ENCODE measurements at regions of chr6 and their contacts with region 1.

Region 1: DNA sequence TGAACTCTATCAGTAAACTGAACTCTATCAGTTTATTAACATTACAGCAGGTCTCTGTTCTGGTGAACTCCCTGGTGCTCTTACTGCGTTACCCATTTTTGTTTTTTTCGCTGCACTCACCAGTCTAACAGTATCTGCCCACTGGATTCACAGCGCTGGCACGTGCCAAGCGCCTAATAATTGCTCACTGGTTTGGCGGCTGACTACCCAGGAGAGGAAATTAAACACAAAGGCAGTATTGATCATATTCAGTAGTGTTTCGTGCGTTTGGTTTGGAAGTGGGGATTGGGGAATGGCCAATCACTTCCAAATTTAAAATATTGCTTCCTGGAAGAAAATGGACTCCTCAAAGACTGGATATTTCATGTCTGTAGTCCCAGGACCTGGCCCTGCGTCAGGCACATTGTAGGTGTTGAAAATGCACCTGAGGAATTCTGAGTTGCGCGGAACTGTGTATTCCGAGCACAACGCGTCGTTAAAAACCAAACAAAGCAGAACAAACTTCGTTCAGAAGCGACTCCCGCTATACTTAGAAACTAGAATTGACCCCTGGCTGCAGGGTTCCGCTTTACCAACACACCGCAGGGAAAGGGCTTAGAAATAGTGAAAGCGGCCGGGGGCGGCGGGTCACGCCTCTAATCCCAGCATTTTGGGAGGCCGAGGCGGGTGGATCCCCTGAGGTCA is 1.1 kb upstream of the RPS12 start:
- DNase-seq: no peak
- ATAC-seq: peak; percentile 6
- H3K4me3 ChIP-seq: peak overlapping the region; percentile 73
- H3K27ac ChIP-seq: peak overlapping the region; percentile 95
- H3K4me1 ChIP-seq: peaks cover 2% of the 10 kb centered on the region
- H3K27me3 ChIP-seq: no peaks in the 10 kb centered on the region; the same call in 1 of the 2 replicates
- CTCF ChIP-seq: no peak
- POLR2A ChIP-seq: no peak
- RAD21 ChIP-seq: no peak

Region 2: GRCh38 chr6:131995917-131996316 is 817.4 kb before region 1 on chr6:
- CTCF ChIA-PET with region 1: no interaction called
- POLR2A ChIA-PET with region 1: interaction called, 10 read pairs
- dilution Hi-C with region 1: no loop called
- in situ Hi-C with region 1: no loop called
- intact Hi-C with region 1: no loop called
- DNase-seq: peak; percentile 94
- ATAC-seq: peak; percentile 85
- H3K4me3 ChIP-seq: no peak overlapping the region
- H3K27ac ChIP-seq: no peak overlapping the region
- H3K4me1 ChIP-seq: peaks cover 2% of the 10 kb centered on the region
- H3K27me3 ChIP-seq: no peaks in the 10 kb centered on the region
- CTCF ChIP-seq: no peak
- POLR2A ChIP-seq: no peak
- RAD21 ChIP-seq: no peak

Region 3: DNA sequence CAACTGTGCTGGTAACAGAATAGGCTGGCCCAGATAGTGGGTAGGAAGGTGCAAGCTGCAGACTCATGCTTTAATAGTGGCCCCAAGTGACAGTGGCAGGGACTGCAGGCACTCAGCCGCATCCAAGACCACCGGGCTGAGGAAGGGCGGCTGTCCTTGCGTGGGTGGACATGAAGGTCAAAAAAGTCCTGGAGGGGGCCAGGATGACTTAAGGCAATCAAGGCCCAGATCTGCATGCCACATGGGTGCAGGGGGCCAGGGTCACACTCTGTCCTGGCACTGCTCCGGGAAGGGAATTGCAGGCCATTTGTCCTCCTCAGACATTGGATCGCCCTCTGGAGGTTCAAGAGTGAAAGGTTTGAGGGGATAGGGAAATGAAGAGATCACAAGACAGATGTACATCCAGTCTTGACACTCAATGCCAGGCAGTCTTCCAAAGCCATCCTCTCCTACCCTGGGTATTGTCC is 45.2 kb before region 1 on chr6:
- CTCF ChIA-PET with region 1: no interaction called
- POLR2A ChIA-PET with region 1: interaction called, 4 read pairs
- dilution Hi-C with region 1: no loop called
- in situ Hi-C with region 1: no loop called
- intact Hi-C with region 1: loop called (anchors 1 kb)
- DNase-seq: no peak
- ATAC-seq: peak; percentile 61
- H3K4me3 ChIP-seq: no peak overlapping the region
- H3K27ac ChIP-seq: no peak overlapping the region
- H3K4me1 ChIP-seq: peaks cover 2% of the 10 kb centered on the region; the same call in 1 of the 2 replicates
- H3K27me3 ChIP-seq: no peaks in the 10 kb centered on the region
- CTCF ChIP-seq: peak; percentile 21; the same call in 1 of the 2 replicates
- POLR2A ChIP-seq: no peak
- RAD21 ChIP-seq: no peak

Region 4: GRCh38 chr6:132798869-132799538 is 14.3 kb before region 1 on chr6:
- CTCF ChIA-PET with region 1: interaction called, 8 read pairs
- POLR2A ChIA-PET with region 1: interaction called, 14 read pairs
- dilution Hi-C with region 1: no loop called
- in situ Hi-C with region 1: no loop called
- intact Hi-C with region 1: no loop called
- DNase-seq: peak; percentile 61
- ATAC-seq: peak; percentile 71
- H3K4me3 ChIP-seq: peak overlapping the region; percentile 95
- H3K27ac ChIP-seq: no peak overlapping the region
- H3K4me1 ChIP-seq: no peaks in the 10 kb centered on the region
- H3K27me3 ChIP-seq: peaks cover 4% of the 10 kb centered on the region
- CTCF ChIP-seq: peak; percentile 75
- POLR2A ChIP-seq: no peak
- RAD21 ChIP-seq: peak; percentile 54

Measured in IMR-90 (cell line).